CD8-positive, alpha-beta T cell (primary cell): ENCODE measurements at regions of chr15 and their contacts with region 1.

Region 1: GRCh38 chr15:64989416-64990167 is at the start of gene SPG21:
- DNase-seq: peak; percentile 77 to 96 (median 91)
- ATAC-seq: peak; percentile 88
- H3K4me3 ChIP-seq: peak within 1 kb of the TSS; percentile 73 to 88
- H3K4me3 Mint-ChIP-seq: peak within 1 kb of the TSS; percentile 96
- H3K27ac ChIP-seq: peak within 1 kb of the TSS; percentile 68 to 84
- H3K27ac Mint-ChIP-seq: peak within 1 kb of the TSS; percentile 94
- H3K4me1 ChIP-seq: peaks cover 12% of the 10 kb centered on the region
- H3K4me1 Mint-ChIP-seq: peaks cover 45% of the 10 kb centered on the region
- H3K27me3 ChIP-seq: no peaks in the 10 kb centered on the region
- H3K27me3 Mint-ChIP-seq: no peaks in the 10 kb centered on the region
- CTCF ChIP-seq: no peak
- total RNA-seq, gene SPG21: 25.1 to 28.2 TPM

Region 2: DNA sequence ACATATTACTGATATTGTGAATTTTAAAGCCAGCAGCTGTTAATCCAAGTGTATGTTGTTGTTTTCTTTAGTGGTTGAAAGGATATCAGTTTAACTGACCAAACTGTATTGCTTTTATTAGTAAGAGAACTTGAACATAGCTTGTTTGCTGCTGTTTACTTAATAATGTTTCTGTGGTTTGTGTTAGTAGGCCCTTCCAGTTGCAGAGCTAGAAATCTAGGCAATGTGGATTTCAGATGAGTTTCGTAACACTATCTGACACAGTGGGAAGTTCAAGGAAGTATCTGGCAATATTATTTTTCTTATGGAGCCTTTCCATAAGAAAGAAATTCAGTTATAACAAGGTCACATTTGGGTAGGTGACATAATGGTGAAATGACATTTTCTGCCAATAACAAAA is 510.7 kb before region 1 on chr15:
- CTCF ChIA-PET with region 1: no interaction called
- POLR2A ChIA-PET with region 1: no interaction called
- intact Hi-C with region 1: no loop called
- DNase-seq: no peak
- ATAC-seq: no peak
- H3K4me3 ChIP-seq: no peak overlapping the region
- H3K4me3 Mint-ChIP-seq: no peak overlapping the region
- H3K27ac ChIP-seq: no peak overlapping the region
- H3K27ac Mint-ChIP-seq: peak overlapping the region; percentile 6
- H3K4me1 ChIP-seq: peaks cover 12% of the 10 kb centered on the region
- H3K4me1 Mint-ChIP-seq: peaks cover 43% of the 10 kb centered on the region
- H3K27me3 ChIP-seq: no peaks in the 10 kb centered on the region
- H3K27me3 Mint-ChIP-seq: no peaks in the 10 kb centered on the region
- CTCF ChIP-seq: no peak

Region 3: DNA sequence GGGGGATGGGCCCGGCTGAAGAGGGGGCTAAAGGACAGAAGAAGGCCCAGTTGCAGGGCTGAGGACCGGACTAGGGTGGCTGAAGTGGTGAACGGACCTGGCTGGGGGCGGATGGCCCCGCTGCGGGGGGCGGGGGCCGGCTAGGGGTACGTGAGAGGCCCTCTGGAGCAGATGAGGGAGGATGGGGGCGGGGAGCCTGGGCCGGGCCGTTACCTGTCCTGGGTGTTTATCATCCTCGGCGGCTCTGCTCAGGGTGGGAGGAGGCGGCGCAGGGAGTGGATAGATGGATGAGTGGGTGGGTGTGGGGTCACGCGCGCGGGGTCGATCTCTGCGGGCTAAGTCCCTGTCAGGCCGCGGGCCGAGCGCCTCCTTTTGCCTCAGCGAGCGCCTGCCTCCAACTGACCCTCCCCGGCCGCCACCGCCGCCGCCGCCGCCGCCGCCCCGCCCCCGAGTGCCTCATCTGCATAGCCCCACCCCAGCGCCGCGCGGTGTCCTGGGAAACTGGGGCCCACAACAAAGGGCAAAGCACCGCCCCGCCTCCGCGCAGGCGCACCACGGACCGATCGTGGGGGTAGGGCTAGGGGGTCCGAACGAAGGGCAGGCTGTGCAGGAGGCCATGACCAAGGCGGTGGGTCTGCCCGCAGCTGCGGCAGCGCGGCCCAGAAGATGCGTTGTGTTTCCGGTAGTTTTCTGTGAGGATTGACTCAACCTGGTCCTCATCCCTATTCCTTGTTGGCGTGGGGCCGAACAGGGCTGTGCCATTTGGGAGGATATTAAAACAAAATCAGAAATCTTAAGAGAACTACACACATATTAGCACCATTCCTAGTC is 286.6 kb before region 1 on chr15:
- CTCF ChIA-PET with region 1: no interaction called
- POLR2A ChIA-PET with region 1: no interaction called
- intact Hi-C with region 1: loop called in 1 of 2 experiments (anchors 1 kb)
- DNase-seq: peak; percentile 90 to 97 (median 95)
- ATAC-seq: peak; percentile 95
- H3K4me3 ChIP-seq: peak overlapping the region; percentile 79 to 86
- H3K4me3 Mint-ChIP-seq: peak overlapping the region; percentile 91
- H3K27ac ChIP-seq: peak overlapping the region; percentile 60 to 66
- H3K27ac Mint-ChIP-seq: peak overlapping the region; percentile 92
- H3K4me1 ChIP-seq: peaks cover 47% of the 10 kb centered on the region
- H3K4me1 Mint-ChIP-seq: peaks cover 51% of the 10 kb centered on the region
- H3K27me3 ChIP-seq: no peaks in the 10 kb centered on the region
- H3K27me3 Mint-ChIP-seq: no peaks in the 10 kb centered on the region
- CTCF ChIP-seq: no peak

Region 4: DNA sequence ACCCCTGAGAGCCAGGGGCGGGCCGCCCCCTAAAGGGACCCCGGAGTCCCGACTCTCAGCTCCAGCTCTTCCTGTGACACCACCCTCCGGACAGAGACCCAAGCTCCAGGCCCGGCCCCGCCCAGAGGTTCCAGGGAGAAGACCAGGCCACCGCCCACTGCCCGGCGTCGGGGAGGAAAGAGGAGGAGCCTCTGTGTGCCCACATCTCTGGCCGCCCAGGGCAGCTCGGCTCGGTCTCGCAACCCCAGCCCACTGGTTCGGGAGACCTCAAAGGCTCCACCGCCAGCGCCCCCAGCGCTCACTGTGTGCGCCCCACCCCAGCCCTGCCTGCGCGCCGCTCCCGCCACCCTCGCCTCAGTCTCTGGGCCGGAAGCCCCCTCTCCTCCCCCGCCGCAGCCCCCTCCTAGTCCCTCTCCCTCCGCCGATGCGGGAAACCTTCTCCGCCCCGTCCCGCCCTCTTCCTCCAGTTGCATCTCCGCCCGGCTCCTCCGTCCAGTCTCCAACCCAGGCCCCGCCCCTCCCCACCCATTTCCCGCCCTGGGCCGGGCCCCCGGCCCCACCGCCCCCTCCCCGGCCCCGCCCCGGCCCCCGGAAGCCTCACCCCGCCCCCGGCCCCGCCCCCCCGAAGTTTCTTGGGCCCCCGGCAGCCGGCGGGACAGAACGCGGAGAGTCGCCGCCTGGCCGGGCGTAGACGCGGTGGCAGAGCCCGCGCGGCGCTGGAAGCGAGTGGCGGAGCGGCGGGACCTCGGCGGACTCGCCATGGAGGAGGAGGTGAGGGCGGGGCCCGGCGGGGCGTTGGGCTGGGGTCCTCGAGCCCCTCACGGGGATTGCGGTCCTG is 148.1 kb before region 1 on chr15 and contains the start of gene PLEKHO2:
- CTCF ChIA-PET with region 1: no interaction called
- POLR2A ChIA-PET with region 1: no interaction called
- intact Hi-C with region 1: loop called (anchors 1 to 5 kb)
- DNase-seq: peak; percentile 66 to 96 (median 91)
- ATAC-seq: peak; percentile 76
- H3K4me3 ChIP-seq: peak within 1 kb of the TSS; percentile 65 to 71
- H3K4me3 Mint-ChIP-seq: peak within 1 kb of the TSS; percentile 95
- H3K27ac ChIP-seq: peak within 1 kb of the TSS; percentile 57 to 79
- H3K27ac Mint-ChIP-seq: peak within 1 kb of the TSS; percentile 93
- H3K4me1 ChIP-seq: peaks cover 81% of the 10 kb centered on the region
- H3K4me1 Mint-ChIP-seq: peaks cover 82% of the 10 kb centered on the region
- H3K27me3 ChIP-seq: no peaks in the 10 kb centered on the region
- H3K27me3 Mint-ChIP-seq: no peaks in the 10 kb centered on the region
- CTCF ChIP-seq: peak; percentile 40
- total RNA-seq, gene PLEKHO2: 7.9 to 8.2 TPM

Region 5: DNA sequence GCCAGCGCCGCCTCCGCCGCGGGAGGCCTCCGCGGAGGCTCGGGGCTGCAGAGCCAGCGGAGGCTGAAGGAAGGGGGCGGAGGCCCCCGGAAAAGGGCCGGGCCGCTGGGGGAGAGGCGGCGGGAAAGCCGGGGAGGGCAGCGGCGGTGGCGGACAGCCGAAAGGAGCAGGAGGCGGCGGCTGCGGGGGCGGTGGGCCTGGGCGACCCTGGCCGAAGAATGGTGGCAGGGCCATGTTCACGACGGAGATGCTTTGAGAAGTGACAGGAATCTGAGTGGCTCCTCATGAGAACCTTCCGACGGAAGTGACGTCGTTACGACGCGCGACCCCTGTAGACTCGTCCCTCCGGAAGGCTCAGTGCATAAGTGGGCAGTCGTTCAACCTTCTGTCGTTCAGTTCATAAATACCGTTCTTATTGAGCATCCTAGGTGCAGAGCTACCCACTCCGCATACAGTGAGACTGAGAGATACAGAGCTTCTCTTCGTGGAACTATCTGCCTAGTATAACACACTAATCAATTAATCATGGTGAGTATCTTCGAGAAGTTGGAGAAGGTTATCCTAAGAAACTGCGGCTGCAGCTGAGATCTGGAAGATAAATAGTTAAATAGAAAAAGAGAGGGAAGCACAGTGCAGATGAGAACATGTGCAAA is 144.1 kb after region 1 on chr15 and contains the start of gene PDCD7:
- CTCF ChIA-PET with region 1: no interaction called
- POLR2A ChIA-PET with region 1: no interaction called
- intact Hi-C with region 1: loop called (anchors 5 kb)
- DNase-seq: peak; percentile 60 to 95 (median 86)
- ATAC-seq: peak; percentile 93
- H3K4me3 ChIP-seq: peak within 1 kb of the TSS; percentile 62 to 78
- H3K4me3 Mint-ChIP-seq: peak within 1 kb of the TSS; percentile 91
- H3K27ac ChIP-seq: peak within 1 kb of the TSS; percentile 80 to 83
- H3K27ac Mint-ChIP-seq: peak within 1 kb of the TSS; percentile 96
- H3K4me1 ChIP-seq: peaks cover 26% of the 10 kb centered on the region
- H3K4me1 Mint-ChIP-seq: peaks cover 31% of the 10 kb centered on the region
- H3K27me3 ChIP-seq: no peaks in the 10 kb centered on the region
- H3K27me3 Mint-ChIP-seq: no peaks in the 10 kb centered on the region
- CTCF ChIP-seq: no peak
- total RNA-seq, gene PDCD7: 20.7 to 21.7 TPM

Region 6: GRCh38 chr15:65163041-65163440 is 173.4 kb after region 1 on chr15:
- CTCF ChIA-PET with region 1: no interaction called
- POLR2A ChIA-PET with region 1: no interaction called
- intact Hi-C with region 1: no loop called
- DNase-seq: no peak
- ATAC-seq: no peak
- H3K4me3 ChIP-seq: no peak overlapping the region
- H3K4me3 Mint-ChIP-seq: no peak overlapping the region
- H3K27ac ChIP-seq: no peak overlapping the region
- H3K27ac Mint-ChIP-seq: peak overlapping the region; percentile 52
- H3K4me1 ChIP-seq: no peaks in the 10 kb centered on the region
- H3K4me1 Mint-ChIP-seq: peaks cover 16% of the 10 kb centered on the region
- H3K27me3 ChIP-seq: no peaks in the 10 kb centered on the region
- H3K27me3 Mint-ChIP-seq: no peaks in the 10 kb centered on the region
- CTCF ChIP-seq: no peak

Region 7: GRCh38 chr15:65298731-65299130 is 309.1 kb after region 1 on chr15:
- CTCF ChIA-PET with region 1: interaction called, 3 read pairs
- POLR2A ChIA-PET with region 1: no interaction called
- intact Hi-C with region 1: loop called in 1 of 2 experiments (anchors 5 kb)
- DNase-seq: no peak
- ATAC-seq: no peak
- H3K4me3 ChIP-seq: peak overlapping the region in 1 of 2 experiments; percentile 6
- H3K4me3 Mint-ChIP-seq: peak overlapping the region; percentile 88
- H3K27ac ChIP-seq: peak overlapping the region in 1 of 2 experiments; percentile 41
- H3K27ac Mint-ChIP-seq: peak overlapping the region; percentile 84
- H3K4me1 ChIP-seq: peaks cover 36% of the 10 kb centered on the region
- H3K4me1 Mint-ChIP-seq: peaks cover 45% of the 10 kb centered on the region
- H3K27me3 ChIP-seq: no peaks in the 10 kb centered on the region
- H3K27me3 Mint-ChIP-seq: no peaks in the 10 kb centered on the region
- CTCF ChIP-seq: no peak

Region 8: DNA sequence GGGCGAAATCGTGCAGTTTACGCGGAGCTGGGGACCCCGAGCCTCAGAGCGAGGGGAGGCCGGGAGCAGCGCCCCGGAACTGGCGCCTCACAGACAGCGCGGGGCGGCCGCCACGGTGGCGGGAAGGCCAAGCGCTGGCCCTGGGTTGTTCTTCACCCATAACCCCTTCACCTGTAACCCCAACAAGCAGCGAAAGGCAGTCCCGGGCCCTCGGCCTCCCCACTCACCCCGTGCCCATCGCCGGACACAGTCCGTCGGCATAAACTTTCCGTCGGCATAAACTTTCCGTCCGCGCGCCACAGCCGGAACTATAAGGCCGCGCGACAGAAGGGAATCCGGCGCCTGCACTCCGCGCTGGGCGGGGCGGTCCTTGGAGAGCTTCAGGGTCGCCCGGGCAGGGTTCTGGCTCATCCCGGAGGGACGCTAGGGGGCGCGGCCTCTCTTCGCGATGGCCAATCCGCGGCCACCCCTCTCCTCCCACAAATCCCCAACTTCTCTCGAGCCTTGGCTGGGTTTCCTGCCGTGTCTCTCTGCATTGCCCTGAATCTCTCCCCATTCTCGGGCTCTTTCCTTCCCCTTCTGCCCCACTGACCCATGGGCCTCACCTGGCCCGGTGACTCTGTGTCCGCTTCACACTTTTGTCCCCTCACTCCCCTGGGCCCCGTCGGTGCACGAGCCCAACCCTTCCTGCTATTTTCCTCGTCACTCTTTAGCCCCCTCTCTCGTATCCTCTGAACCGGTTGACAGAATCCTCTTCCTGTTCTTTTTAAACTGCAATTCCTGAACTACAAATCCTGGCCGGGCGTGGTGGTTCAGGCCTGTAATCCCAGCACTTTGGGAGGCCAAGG is 621.5 kb after region 1 on chr15 and contains the start of gene INTS14:
- CTCF ChIA-PET with region 1: no interaction called
- POLR2A ChIA-PET with region 1: no interaction called
- intact Hi-C with region 1: loop called in 1 of 2 experiments (anchors 5 kb)
- DNase-seq: peak; percentile 81 to 95 (median 92)
- ATAC-seq: peak; percentile 95
- H3K4me3 ChIP-seq: peak within 1 kb of the TSS; percentile 85 to 96
- H3K4me3 Mint-ChIP-seq: peak within 1 kb of the TSS; percentile 97
- H3K27ac ChIP-seq: peak within 1 kb of the TSS; percentile 80 to 95
- H3K27ac Mint-ChIP-seq: peak within 1 kb of the TSS; percentile 98
- H3K4me1 ChIP-seq: peaks cover 17% of the 10 kb centered on the region
- H3K4me1 Mint-ChIP-seq: peaks cover 43% of the 10 kb centered on the region
- H3K27me3 ChIP-seq: no peaks in the 10 kb centered on the region
- H3K27me3 Mint-ChIP-seq: no peaks in the 10 kb centered on the region
- CTCF ChIP-seq: peak; percentile 26
- total RNA-seq, gene INTS14: 26.7 to 28.6 TPM